ENCODE measurements at regions of chr6 and their contacts with region 1.

Region 1: GRCh38 chr6:150016324-150017185 is 8.8 kb downstream of the RAET1L start:
- DNase-seq: no peak
- H3K4me3 ChIP-seq: no peak overlapping the region
- H3K27me3 ChIP-seq: peaks cover 32% of the 10 kb centered on the region
- CTCF ChIP-seq: peak; percentile 45

Region 2: DNA sequence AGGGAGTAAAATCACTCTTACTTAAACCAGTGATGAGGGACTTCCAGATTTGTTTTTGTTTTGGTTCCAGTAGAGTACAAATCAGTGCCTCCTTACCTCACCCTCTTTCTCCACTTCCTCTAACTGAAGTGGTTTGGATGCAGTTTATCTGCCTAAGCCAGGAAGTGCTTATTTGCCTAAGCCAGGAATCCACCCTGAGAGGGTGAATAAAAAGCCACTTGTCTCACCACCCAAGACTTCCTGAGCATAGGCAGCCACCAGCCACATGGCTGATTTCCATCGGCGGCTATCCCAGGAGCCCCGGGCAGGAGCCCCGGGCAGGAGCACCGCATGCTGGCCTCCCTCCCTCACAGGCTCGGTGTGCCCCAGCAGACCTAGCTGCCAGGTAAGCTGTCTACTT is 164.4 kb before region 1 on chr6:
- CTCF ChIA-PET with region 1: no interaction called
- POLR2A ChIA-PET with region 1: no interaction called
- DNase-seq: no peak
- H3K4me3 ChIP-seq: no peak overlapping the region
- H3K27me3 ChIP-seq: no peaks in the 10 kb centered on the region
- CTCF ChIP-seq: no peak

Region 3: GRCh38 chr6:149934249-149935156 is 82.1 kb before region 1 on chr6:
- CTCF ChIA-PET with region 1: interaction called, 24 read pairs
- POLR2A ChIA-PET with region 1: no interaction called
- DNase-seq: no peak
- H3K4me3 ChIP-seq: no peak overlapping the region
- H3K27me3 ChIP-seq: peaks cover 24% of the 10 kb centered on the region
- CTCF ChIP-seq: peak; percentile 71

Region 4: DNA sequence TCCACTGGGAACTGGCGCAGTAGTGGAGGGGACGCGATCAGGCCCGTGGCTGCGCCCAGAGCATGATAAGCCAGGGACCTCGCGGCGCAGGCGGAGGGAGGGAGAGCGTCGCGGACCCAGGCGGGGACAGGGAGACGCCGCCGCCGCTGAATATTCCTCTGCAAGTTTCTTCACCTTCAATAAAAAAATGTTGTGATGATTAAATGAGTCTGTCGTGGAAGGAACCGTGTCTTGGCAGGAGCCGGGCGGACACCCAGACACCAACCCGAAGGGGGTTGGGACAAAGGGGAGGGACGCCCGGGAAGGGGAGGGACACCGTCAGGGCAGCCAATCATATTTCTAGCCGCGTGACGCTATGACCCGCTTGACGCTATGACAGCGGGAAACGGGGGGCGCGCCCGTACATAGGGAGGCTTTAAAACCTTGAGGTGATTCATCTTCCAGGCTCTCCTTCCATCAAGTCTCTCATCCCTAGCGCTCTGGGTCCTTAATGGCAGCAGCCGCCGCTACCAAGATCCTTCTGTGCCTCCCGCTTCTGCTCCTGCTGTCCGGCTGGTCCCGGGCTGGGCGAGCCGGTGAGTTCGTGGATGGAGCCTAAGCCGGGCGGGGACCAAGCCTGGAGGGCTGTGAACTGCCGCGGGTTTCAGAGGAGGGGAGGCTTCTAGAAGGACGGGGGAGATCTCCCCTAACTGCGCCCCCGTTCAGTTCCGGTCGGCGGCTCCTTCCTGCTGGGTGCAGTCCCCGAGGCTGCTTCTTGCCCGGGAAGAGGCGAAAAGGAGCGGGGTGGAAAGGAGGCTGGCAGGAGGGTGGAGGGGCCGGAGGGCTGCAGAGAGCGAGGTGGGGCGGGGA is 74.7 kb before region 1 on chr6 and contains the start of gene ULBP2:
- CTCF ChIA-PET with region 1: interaction called, 24 read pairs
- POLR2A ChIA-PET with region 1: no interaction called
- DNase-seq: peak; percentile 73
- H3K4me3 ChIP-seq: peak within 1 kb of the TSS; percentile 88
- H3K27me3 ChIP-seq: peaks cover 6% of the 10 kb centered on the region
- CTCF ChIP-seq: no peak
- polyA plus RNA-seq, gene ULBP2: 15.1 and 22.8 TPM in 2 replicates

Region 5: GRCh38 chr6:150119173-150119572 is 102.6 kb after region 1 on chr6:
- CTCF ChIA-PET with region 1: no interaction called
- POLR2A ChIA-PET with region 1: no interaction called
- DNase-seq: no peak
- H3K4me3 ChIP-seq: no peak overlapping the region
- H3K27me3 ChIP-seq: no peaks in the 10 kb centered on the region
- CTCF ChIP-seq: no peak

Region 6: DNA sequence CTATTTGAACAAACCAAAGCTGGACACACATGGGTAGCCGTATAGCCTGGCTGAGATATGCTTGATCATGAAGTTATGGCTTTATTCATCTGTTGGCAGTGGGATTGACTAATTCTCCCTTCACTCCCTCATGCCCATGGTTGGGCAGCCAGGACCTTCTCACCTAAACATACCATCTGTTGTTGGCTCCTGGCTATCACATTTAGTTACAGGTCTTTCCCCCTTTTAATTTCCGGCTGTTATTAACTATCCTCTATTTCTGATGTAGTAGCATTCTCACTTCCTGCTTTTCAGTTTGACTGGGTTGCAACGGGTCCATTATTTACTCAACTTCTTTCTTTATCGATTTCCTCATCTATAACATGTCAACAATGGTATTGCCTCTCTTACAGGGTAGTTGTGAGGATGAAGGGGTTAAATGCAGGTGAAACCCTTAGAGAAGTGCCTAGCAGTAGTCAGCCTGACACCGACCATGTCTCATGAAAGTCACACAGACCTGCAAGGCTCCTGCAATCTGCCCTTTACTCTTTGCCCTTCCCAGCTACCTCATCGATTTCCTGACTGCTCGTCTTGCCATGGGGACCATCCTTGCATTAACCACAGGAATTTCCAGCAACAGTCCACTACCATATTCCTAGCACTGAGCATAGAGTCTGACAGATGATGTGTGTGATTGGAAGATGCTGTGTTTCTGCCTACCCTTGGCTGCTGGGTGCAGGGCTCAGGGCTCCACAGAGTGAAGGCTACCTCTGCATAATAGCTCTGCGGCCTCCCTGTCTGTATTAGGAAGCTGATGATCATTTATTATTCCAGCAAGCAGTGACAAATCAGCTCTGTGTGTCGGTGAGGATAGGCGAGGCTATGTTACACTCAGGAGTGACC is 168.5 kb after region 1 on chr6:
- CTCF ChIA-PET with region 1: no interaction called
- POLR2A ChIA-PET with region 1: no interaction called
- DNase-seq: no peak
- H3K4me3 ChIP-seq: no peak overlapping the region
- H3K27me3 ChIP-seq: no peaks in the 10 kb centered on the region
- CTCF ChIP-seq: no peak

Region 7: DNA sequence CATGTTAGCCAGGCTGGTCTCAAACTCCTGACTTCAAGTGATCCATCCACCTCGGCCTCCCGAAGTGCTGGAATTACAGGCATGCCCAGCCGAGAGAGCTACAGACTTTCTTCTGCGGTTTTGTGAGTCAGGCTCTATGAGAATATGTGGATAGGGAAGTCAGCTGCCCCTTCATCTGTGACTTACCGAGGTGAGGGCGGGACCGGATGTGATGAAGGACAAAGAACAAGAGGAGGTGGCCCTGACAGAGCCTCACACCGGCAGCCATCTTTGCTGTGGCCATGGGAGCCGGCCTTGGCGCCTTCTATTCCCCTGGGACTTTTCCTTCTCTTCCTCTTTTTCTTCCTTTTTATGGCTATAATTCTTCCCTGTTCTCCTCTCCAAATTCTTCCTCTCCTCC is 419.3 kb after region 1 on chr6:
- CTCF ChIA-PET with region 1: no interaction called
- POLR2A ChIA-PET with region 1: no interaction called
- DNase-seq: no peak
- H3K4me3 ChIP-seq: no peak overlapping the region
- H3K27me3 ChIP-seq: no peaks in the 10 kb centered on the region
- CTCF ChIP-seq: no peak

Measured in BJ (cell line).